ENCODE measurements at regions of chr12 and their contacts with region 1.

Region 1: DNA sequence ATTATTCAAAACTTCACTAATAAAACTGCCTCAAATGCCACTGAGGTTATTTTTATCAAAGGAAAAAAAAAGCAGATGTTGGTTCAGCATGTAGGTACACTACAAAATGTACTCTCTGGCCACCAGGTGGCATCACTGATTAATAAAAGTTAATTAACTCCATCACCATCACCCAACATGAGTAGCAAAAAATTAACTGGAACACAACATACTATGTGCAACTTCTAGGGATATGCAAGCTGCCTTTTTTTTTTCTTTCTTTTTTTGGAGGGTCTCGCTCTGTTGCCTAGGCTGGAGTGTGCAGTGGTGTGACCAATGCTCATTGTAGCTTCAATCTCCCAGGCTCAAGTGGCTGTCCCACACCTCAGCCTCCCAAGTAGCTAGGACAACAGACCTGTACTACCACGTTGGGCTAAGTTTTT is 43.8 kb upstream of the NR2C1 start:
- DNase-seq: peak; percentile 26
- H3K4me3 Mint-ChIP-seq: no peak overlapping the region
- H3K27ac Mint-ChIP-seq: no peak overlapping the region
- H3K4me1 Mint-ChIP-seq: peaks cover 8% of the 10 kb centered on the region
- H3K27me3 Mint-ChIP-seq: peaks cover 2% of the 10 kb centered on the region

Region 2: GRCh38 chr12:95473884-95474659 is 356.9 kb after region 1 on chr12 and contains the start of gene METAP2:
- intact Hi-C with region 1: loop called (anchors 2 kb)
- DNase-seq: peak; percentile 87
- H3K4me3 Mint-ChIP-seq: peak within 1 kb of the TSS; percentile 100
- H3K27ac Mint-ChIP-seq: peak within 1 kb of the TSS; percentile 99
- H3K4me1 Mint-ChIP-seq: peaks cover 29% of the 10 kb centered on the region
- H3K27me3 Mint-ChIP-seq: no peaks in the 10 kb centered on the region
- total RNA-seq, gene METAP2: 111 and 113 TPM in 2 replicates

Region 3: GRCh38 chr12:95529787-95530186 is 412.6 kb after region 1 on chr12:
- intact Hi-C with region 1: loop called (anchors 1 kb)
- DNase-seq: no peak
- H3K4me3 Mint-ChIP-seq: no peak overlapping the region
- H3K27ac Mint-ChIP-seq: no peak overlapping the region
- H3K4me1 Mint-ChIP-seq: peaks cover 5% of the 10 kb centered on the region
- H3K27me3 Mint-ChIP-seq: no peaks in the 10 kb centered on the region

Measured in activated T-helper 2 cell treated with anti-CD3 and anti-CD28 coated beads, Interferon-gamma antibody, Interleukin-2, Interleukin-4, amounts not matched to agents 10 μg/mL and 5 μg/mL and 100 μg/mL, durations not matched to agents 14 hours and 24 hours and 36 hours (primary cell).